Dendritic cell treated with granulocyte-macrophage colony-stimulating factor and Interleukin-4, amounts not matched to agents 40 ng/mL and 50 ng/mL, for 4 days (primary cell): ENCODE measurements at regions of chr1 and their contacts with region 1.

Region 1: DNA sequence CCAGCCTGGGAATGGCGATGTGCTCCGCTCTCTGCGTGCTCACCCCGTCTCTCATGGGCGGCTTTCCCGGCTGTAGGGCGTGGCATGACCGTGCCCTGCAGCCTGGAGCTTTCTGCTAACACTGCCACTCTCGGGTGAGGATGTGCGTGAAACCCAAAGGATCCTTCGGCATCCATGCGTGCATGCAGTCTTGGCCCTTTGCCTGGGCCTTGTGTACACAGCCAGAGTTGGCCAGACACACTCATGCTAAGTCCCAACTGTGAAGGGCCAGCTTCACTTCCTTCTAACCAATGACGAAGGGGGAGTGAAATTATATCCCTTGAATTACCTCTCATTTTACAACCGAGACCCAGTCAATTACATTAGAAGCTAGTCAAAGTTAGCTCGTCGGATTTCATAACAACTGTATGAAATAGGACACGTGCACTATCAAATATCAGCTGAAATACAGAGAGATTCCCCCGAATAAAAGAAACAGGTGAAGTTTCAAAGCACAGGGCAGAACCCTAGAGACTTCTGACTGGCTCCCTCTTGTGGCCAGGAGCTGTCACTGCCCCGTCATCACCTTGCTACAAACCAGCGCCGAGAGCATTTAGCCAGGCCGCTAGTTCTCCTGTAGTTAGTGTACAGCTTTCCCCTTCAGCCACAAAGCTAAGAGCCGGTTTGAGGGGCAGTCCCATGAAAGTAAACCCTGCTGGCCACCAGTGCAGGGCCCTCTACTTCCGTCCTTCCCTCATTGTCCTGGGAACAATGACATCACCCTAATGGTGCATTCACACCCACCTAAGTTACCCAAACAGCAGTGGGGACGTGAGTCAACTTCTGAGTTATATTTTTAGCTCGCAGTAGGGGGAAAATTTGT is 63.4 kb upstream of the COA6 start:
- H3K4me3 Mint-ChIP-seq: peak overlapping the region; percentile 28
- H3K27ac Mint-ChIP-seq: no peak overlapping the region
- H3K4me1 Mint-ChIP-seq: peaks cover 20% of the 10 kb centered on the region
- H3K27me3 Mint-ChIP-seq: peaks cover 5% of the 10 kb centered on the region

Region 2: GRCh38 chr1:234102583-234102982 is 207.2 kb before region 1 on chr1:
- intact Hi-C with region 1: no loop called
- H3K4me3 Mint-ChIP-seq: no peak overlapping the region
- H3K27ac Mint-ChIP-seq: no peak overlapping the region
- H3K4me1 Mint-ChIP-seq: no peaks in the 10 kb centered on the region
- H3K27me3 Mint-ChIP-seq: peaks cover 10% of the 10 kb centered on the region

Region 3: DNA sequence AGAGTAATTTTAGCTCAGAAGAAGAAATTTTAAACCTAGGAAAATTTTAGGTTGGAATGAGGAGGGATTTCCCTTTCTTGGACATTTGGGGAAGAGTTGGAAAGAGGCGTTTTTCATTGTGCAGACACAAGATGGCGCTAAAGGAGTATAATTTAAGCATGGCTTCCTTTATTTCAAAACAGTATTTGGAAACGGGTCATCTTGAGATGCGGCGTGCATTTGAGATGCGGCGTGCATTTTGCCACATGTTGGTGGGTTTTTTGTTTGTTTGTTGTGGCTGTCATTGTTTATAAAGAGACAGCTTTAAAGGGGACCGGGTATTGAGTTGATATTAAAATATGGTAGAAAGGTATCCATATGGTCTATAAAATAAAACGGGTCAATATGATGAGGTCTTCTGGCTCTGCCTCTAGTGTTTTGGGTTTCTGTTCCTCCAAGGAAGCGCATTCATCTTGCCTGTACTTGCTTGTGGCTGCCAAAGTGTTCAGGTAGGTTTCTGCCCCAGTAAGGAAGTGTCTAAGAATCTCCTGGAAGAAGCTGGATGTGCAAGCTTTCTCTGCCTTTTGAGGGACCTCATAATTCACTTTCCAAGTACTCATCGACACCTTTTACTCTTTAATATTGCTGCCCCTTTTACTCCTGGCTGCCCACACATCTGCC is 195.1 kb before region 1 on chr1:
- intact Hi-C with region 1: loop called (anchors 5 kb)
- H3K4me3 Mint-ChIP-seq: no peak overlapping the region
- H3K27ac Mint-ChIP-seq: no peak overlapping the region
- H3K4me1 Mint-ChIP-seq: peaks cover 9% of the 10 kb centered on the region
- H3K27me3 Mint-ChIP-seq: peaks cover 14% of the 10 kb centered on the region

Region 4: DNA sequence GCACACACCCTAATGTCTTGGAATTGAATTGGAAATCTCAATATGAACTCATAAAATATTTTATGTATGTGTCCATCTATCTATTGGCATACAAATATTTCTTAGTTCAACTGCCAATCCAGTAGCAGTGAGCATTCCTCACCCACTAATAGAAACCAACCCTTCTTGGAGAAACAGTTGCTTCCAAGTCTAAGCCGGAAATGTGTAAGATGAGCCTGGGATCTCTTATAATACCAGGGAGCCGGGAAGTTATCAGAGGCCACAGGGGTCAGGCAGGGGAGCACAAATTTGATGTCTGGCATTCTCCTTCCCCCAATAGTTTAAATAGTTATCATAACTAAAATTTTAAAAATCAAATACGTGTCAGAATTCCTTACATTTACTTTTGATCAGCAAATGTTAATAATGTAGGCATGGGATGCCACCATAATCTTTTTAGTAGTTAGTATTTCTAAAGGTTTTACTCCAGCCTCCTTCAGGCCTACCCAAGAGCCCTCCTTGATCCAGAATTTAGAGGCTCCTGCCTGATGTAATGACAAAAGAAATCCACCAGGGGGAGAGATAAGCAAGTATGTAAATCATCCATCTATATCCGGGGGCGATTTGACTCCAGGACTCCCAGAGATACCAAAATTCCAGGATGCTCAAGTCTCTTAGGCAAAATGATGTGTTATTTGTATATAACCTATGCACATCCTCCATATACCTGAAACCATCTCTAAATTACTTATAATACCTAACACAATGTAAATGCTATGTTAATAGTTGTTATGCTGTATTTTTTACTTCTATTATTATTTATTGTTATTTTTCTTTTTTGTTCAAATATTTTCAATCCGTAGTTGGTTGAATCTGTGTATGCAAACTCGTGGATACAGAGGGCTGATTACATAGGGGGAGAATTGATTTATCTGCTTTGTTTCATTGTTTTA is 155.2 kb before region 1 on chr1:
- intact Hi-C with region 1: loop called (anchors 1 kb)
- H3K4me3 Mint-ChIP-seq: no peak overlapping the region
- H3K27ac Mint-ChIP-seq: no peak overlapping the region
- H3K4me1 Mint-ChIP-seq: no peaks in the 10 kb centered on the region
- H3K27me3 Mint-ChIP-seq: peaks cover 1% of the 10 kb centered on the region

Region 5: GRCh38 chr1:234212764-234213657 is 96.8 kb before region 1 on chr1:
- intact Hi-C with region 1: loop called (anchors 2 kb)
- H3K4me3 Mint-ChIP-seq: no peak overlapping the region
- H3K27ac Mint-ChIP-seq: peak overlapping the region; percentile 76
- H3K4me1 Mint-ChIP-seq: peaks cover 39% of the 10 kb centered on the region
- H3K27me3 Mint-ChIP-seq: peaks cover 22% of the 10 kb centered on the region

Region 6: GRCh38 chr1:234599617-234600417 is 290.0 kb after region 1 on chr1:
- intact Hi-C with region 1: no loop called
- H3K4me3 Mint-ChIP-seq: peak overlapping the region; percentile 79
- H3K27ac Mint-ChIP-seq: peak overlapping the region; percentile 93
- H3K4me1 Mint-ChIP-seq: peaks cover 35% of the 10 kb centered on the region
- H3K27me3 Mint-ChIP-seq: no peaks in the 10 kb centered on the region